HepG2 (cell line): ENCODE measurements at regions of chr17 and their contacts with region 1.

Region 1: GRCh38 chr17:66415366-66416206 is 113.2 kb downstream of the PRKCA start:
- DNase-seq: peak; percentile 99
- ATAC-seq: peak; percentile 90
- H3K4me3 ChIP-seq: peak overlapping the region in 1 of 3 experiments; percentile 14; a peak in 2 of 6 replicates
- H3K27ac ChIP-seq: peak overlapping the region; percentile 83
- H3K4me1 ChIP-seq: peaks cover 85% of the 10 kb centered on the region
- H3K27me3 ChIP-seq: no peaks in the 10 kb centered on the region
- CTCF ChIP-seq: no peak
- EP300 ChIP-seq: peak in 1 of 2 experiments; percentile 99; a peak in 2 of 4 replicates
- POLR2A ChIP-seq: peak in 1 of 2 experiments; percentile 14; a peak in 1 of 4 replicates
- RAD21 ChIP-seq: no peak; the same call in 1 of the 2 replicates

Region 2: DNA sequence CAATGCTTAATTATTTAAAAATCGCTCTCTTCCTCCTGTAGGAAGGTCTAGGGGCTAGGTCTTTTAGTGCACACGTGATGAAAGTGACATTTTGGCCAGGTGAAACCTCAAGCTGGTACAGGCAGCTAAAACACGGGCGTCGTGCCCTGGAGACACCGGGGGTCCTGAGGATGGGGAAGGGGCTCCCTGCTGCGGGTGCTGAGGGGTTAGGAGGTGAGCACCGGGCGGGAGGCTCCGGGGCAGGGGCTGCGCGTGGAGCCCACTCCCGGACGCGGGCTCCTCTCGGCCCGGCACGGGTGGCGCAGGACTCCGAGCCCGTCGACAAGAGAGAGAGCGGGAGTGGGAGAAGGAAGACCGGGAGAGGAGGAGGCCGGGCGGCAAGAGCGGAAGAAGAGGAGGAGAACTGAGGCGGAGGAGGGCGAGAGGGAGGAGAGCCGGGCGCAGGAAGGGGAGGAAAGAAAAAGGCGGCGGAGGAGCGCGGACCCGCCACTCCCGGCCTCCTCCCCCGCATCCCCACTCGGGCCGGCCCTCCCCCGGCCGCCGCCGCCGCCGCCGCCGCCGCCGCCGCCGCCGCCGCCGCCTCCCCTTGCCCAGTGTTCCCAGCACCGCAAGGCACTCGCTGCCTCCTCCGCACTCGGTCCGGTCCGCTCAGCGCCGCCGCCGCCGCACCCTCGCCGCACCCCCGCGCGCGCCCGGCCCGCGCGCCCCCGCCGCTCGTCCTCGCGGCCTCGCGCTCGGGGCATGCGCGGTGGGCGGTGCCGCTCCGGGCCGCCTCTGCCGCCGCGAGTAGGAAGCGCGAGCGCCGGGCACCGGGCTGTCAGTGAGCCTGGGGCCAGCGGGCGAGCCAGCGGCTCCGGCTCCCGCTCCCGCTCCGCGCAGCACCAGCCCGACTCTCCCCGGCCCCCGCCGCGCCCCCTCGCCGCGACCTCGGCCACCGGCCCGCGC is 113.5 kb before region 1 on chr17 and contains the start of gene PRKCA:
- CTCF ChIA-PET with region 1: no interaction called
- POLR2A ChIA-PET with region 1: interaction called, 17 read pairs
- in situ Hi-C with region 1: loop called (anchors 10 kb)
- intact Hi-C with region 1: loop called (anchors 2 kb)
- DNase-seq: peak; percentile 54
- ATAC-seq: peak; percentile 60
- H3K4me3 ChIP-seq: peak within 1 kb of the TSS; percentile 88 to 95 (median 91)
- H3K27ac ChIP-seq: peak within 1 kb of the TSS; percentile 61
- H3K4me1 ChIP-seq: peaks cover 32% of the 10 kb centered on the region
- H3K27me3 ChIP-seq: no peaks in the 10 kb centered on the region
- CTCF ChIP-seq: no peak
- EP300 ChIP-seq: no peak
- POLR2A ChIP-seq: peak; percentile 91 to 97
- RAD21 ChIP-seq: no peak; the same call in 1 of the 2 replicates
- total RNA-seq, gene PRKCA: 18.5 and 24.4 TPM in 2 replicates